ENCODE measurements at regions of chr12 and their contacts with region 1.

Region 1: GRCh38 chr12:96399919-96400797 is at the start of gene CDK17:
- DNase-seq: peak; percentile 82 to 97 (median 88)
- ATAC-seq: peak; percentile 63
- H3K4me3 ChIP-seq: peak within 1 kb of the TSS; percentile 88
- H3K4me3 Mint-ChIP-seq: peak within 1 kb of the TSS; percentile 99
- H3K27ac ChIP-seq: peak within 1 kb of the TSS; percentile 86 to 99
- H3K27ac Mint-ChIP-seq: peak within 1 kb of the TSS; percentile 93
- H3K4me1 ChIP-seq: peaks cover 15% of the 10 kb centered on the region
- H3K4me1 Mint-ChIP-seq: peaks cover 49% of the 10 kb centered on the region
- H3K27me3 ChIP-seq: no peaks in the 10 kb centered on the region
- H3K27me3 Mint-ChIP-seq: no peaks in the 10 kb centered on the region
- CTCF ChIP-seq: no peak
- total RNA-seq, gene CDK17: 112 to 113 TPM

Region 2: GRCh38 chr12:95942524-95943329 is 457.4 kb before region 1 on chr12 and contains the start of gene CCDC38:
- CTCF ChIA-PET with region 1: no interaction called
- POLR2A ChIA-PET with region 1: interaction called, 14 read pairs
- intact Hi-C with region 1: no loop called
- DNase-seq: peak; percentile 70 to 92 (median 79)
- ATAC-seq: peak; percentile 94
- H3K4me3 ChIP-seq: peak within 1 kb of the TSS; percentile 84
- H3K4me3 Mint-ChIP-seq: peak within 1 kb of the TSS; percentile 97
- H3K27ac ChIP-seq: peak within 1 kb of the TSS; percentile 61 to 76
- H3K27ac Mint-ChIP-seq: peak within 1 kb of the TSS; percentile 88
- H3K4me1 ChIP-seq: peaks cover 14% of the 10 kb centered on the region
- H3K4me1 Mint-ChIP-seq: peaks cover 10% of the 10 kb centered on the region
- H3K27me3 ChIP-seq: no peaks in the 10 kb centered on the region
- H3K27me3 Mint-ChIP-seq: no peaks in the 10 kb centered on the region
- CTCF ChIP-seq: no peak
- total RNA-seq, gene CCDC38: 0.11 TPM in 1 of 2 experiments, not detected in the other

Region 3: GRCh38 chr12:96208801-96209549 is 191.2 kb before region 1 on chr12:
- CTCF ChIA-PET with region 1: interaction called, 13 read pairs
- POLR2A ChIA-PET with region 1: interaction called, 31 read pairs
- intact Hi-C with region 1: no loop called
- DNase-seq: peak in 2 of 14 experiments; percentile 23 to 30
- ATAC-seq: no peak
- H3K4me3 ChIP-seq: peak overlapping the region; percentile 3
- H3K4me3 Mint-ChIP-seq: peak overlapping the region; percentile 87
- H3K27ac ChIP-seq: peak overlapping the region in 1 of 2 donors; percentile 46
- H3K27ac Mint-ChIP-seq: peak overlapping the region; percentile 82
- H3K4me1 ChIP-seq: peaks cover 87% of the 10 kb centered on the region
- H3K4me1 Mint-ChIP-seq: peaks cover 97% of the 10 kb centered on the region
- H3K27me3 ChIP-seq: no peaks in the 10 kb centered on the region
- H3K27me3 Mint-ChIP-seq: no peaks in the 10 kb centered on the region
- CTCF ChIP-seq: no peak

Region 4: DNA sequence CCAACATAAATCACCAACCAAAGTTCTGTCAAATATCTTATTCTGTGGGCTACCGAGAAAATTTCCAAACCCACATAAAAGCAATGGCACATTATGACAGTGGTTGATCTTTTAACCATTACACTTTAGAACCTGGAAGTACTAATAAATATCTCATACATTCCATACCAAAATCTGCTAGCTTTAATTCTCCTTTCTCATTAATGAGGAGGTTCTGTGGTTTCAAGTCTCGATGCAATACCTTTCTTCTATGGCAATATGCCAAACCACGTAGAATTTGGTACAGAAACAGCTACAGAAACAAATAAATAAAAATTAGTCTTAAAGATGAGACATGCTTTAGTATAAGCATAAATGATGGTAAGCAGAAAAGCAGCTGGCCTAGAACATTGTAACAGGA is 105.3 kb before region 1 on chr12:
- CTCF ChIA-PET with region 1: no interaction called
- POLR2A ChIA-PET with region 1: interaction called, 22 read pairs
- intact Hi-C with region 1: loop called in 1 of 2 experiments (anchors 2 kb)
- DNase-seq: peak in 3 of 14 experiments; percentile 35 to 51 (median 44)
- ATAC-seq: peak; percentile 51
- H3K4me3 ChIP-seq: no peak overlapping the region
- H3K4me3 Mint-ChIP-seq: peak overlapping the region; percentile 38
- H3K27ac ChIP-seq: no peak overlapping the region
- H3K27ac Mint-ChIP-seq: peak overlapping the region; percentile 55
- H3K4me1 ChIP-seq: peaks cover 5% of the 10 kb centered on the region
- H3K4me1 Mint-ChIP-seq: peaks cover 34% of the 10 kb centered on the region
- H3K27me3 ChIP-seq: no peaks in the 10 kb centered on the region
- H3K27me3 Mint-ChIP-seq: no peaks in the 10 kb centered on the region
- CTCF ChIP-seq: no peak

Region 5: GRCh38 chr12:96327346-96327745 is 72.8 kb before region 1 on chr12:
- CTCF ChIA-PET with region 1: interaction called, 4 read pairs
- POLR2A ChIA-PET with region 1: interaction called, 37 read pairs
- intact Hi-C with region 1: loop called (anchors 5 kb)
- DNase-seq: no peak
- ATAC-seq: peak; percentile 8
- H3K4me3 ChIP-seq: no peak overlapping the region
- H3K4me3 Mint-ChIP-seq: peak overlapping the region; percentile 22
- H3K27ac ChIP-seq: no peak overlapping the region
- H3K27ac Mint-ChIP-seq: peak overlapping the region; percentile 76
- H3K4me1 ChIP-seq: peaks cover 8% of the 10 kb centered on the region
- H3K4me1 Mint-ChIP-seq: peaks cover 77% of the 10 kb centered on the region
- H3K27me3 ChIP-seq: no peaks in the 10 kb centered on the region
- H3K27me3 Mint-ChIP-seq: no peaks in the 10 kb centered on the region
- CTCF ChIP-seq: no peak

Region 6: GRCh38 chr12:96375841-96376604 is 24.1 kb before region 1 on chr12:
- CTCF ChIA-PET with region 1: interaction called, 21 read pairs
- POLR2A ChIA-PET with region 1: interaction called, 98 read pairs
- intact Hi-C with region 1: loop called (anchors 2 kb)
- DNase-seq: no peak
- ATAC-seq: no peak
- H3K4me3 ChIP-seq: no peak overlapping the region
- H3K4me3 Mint-ChIP-seq: peak overlapping the region; percentile 7
- H3K27ac ChIP-seq: peak overlapping the region; percentile 4 to 20
- H3K27ac Mint-ChIP-seq: peak overlapping the region; percentile 98
- H3K4me1 ChIP-seq: peaks cover 38% of the 10 kb centered on the region
- H3K4me1 Mint-ChIP-seq: peaks cover 82% of the 10 kb centered on the region
- H3K27me3 ChIP-seq: no peaks in the 10 kb centered on the region
- H3K27me3 Mint-ChIP-seq: no peaks in the 10 kb centered on the region
- CTCF ChIP-seq: no peak

Region 7: DNA sequence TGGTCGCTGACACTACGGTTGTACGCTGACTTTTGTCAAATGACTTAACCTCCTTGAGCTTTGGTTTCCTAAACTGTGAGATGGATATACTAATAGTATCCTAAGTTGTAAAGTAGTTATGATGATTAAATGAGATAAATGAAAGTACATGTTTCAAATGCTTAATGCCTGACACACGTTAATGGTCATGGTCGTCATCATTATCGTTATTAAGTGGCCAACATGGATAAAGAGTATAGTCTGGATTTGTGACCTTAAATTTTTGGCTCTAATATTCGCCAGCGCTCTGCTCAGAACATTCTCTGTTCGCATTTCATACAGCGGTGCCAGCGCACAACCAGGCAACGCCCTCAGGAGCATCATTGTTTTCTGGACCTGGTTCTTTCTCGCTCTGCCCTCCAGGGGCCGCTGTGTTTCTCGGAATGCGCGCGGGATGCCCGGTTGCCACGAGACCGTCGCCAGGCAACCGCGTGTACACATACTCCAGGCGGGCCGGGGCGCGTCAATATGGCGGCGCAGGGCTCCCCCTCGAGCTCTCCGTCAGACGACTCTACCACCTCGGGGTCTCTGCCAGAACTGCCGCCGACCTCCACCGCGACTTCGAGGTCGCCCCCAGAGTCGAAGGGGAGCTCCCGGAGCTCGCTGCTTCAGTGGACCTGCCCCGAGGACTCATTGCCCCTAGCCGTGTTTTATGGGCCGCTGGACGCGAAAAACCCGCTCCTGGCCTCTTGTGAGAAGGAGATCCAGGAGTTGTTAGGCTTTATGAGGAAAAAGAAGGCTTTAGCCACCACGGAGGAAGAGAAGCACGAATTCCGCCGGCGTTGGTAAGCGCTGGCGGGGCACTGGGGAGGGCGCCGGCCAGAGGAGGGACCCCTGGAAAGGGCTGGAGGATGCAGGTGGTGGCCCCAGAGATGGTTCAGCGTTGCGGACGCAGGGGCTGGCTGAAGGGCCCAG is 89.2 kb after region 1 on chr12 and contains the start of gene CFAP54:
- CTCF ChIA-PET with region 1: interaction called, 25 read pairs
- POLR2A ChIA-PET with region 1: interaction called, 21 read pairs
- intact Hi-C with region 1: loop called (anchors 1 to 2 kb)
- DNase-seq: peak; percentile 91 to 98 (median 94)
- ATAC-seq: peak; percentile 85
- H3K4me3 ChIP-seq: peak within 1 kb of the TSS; percentile 68
- H3K4me3 Mint-ChIP-seq: peak within 1 kb of the TSS; percentile 90
- H3K27ac ChIP-seq: no peak within 1 kb of the TSS
- H3K27ac Mint-ChIP-seq: peak within 1 kb of the TSS; percentile 80
- H3K4me1 ChIP-seq: peaks cover 28% of the 10 kb centered on the region
- H3K4me1 Mint-ChIP-seq: peaks cover 16% of the 10 kb centered on the region
- H3K27me3 ChIP-seq: no peaks in the 10 kb centered on the region
- H3K27me3 Mint-ChIP-seq: peaks cover 6% of the 10 kb centered on the region
- CTCF ChIP-seq: peak; percentile 80
- total RNA-seq, gene CFAP54: 0.20 to 0.22 TPM